Activated CD4-positive, alpha-beta T cell treated with anti-CD3 and anti-CD28 coated beads for 36 hours (primary cell): ENCODE measurements at regions of chr13 and their contacts with region 1.

Region 1: DNA sequence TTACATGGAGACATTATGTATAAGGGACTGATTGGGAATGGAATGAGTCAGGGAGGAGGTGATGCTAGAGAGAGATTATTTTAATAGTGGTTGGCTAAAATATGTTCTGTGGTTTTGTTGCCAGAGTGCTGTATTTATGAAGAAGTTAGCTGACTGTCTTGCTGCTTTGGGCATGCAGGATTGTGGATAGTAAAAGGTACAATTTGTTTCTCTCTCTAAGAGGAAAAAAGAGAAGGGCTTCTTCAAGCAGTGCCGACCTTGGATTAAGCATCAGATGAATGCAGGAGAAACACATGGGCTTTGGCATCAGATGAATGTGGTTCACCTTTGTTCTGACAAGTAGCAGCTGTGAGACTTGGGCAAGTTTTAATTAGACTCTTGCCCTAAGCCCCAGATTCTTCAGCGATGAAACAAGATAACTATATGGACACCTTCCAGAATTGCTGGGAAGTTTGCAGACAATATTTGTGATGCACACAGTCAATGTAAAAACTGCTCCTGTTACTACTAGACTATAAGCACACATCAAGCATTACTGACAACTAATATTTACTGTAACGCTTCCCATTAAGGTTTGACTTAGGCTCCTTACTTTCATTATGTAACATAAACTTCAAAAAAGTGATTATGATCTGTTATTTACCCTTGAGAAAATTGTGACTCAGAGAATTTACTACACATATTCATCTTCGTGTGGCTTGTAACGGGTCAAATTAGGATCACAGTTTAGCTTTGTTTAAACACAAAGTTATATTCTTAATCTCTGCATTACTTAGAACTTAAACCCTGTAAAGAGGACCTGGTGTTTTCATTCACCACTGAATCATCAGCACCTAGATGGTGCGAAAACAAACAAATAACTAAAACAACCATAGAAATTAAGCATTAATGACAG is 824.0 kb downstream of the PCDH9 start:
- DNase-seq: no peak
- ATAC-seq: no peak
- H3K4me3 Mint-ChIP-seq: no peak overlapping the region
- H3K27ac Mint-ChIP-seq: no peak overlapping the region
- H3K4me1 Mint-ChIP-seq: no peaks in the 10 kb centered on the region
- H3K27me3 Mint-ChIP-seq: no peaks in the 10 kb centered on the region

Region 2: DNA sequence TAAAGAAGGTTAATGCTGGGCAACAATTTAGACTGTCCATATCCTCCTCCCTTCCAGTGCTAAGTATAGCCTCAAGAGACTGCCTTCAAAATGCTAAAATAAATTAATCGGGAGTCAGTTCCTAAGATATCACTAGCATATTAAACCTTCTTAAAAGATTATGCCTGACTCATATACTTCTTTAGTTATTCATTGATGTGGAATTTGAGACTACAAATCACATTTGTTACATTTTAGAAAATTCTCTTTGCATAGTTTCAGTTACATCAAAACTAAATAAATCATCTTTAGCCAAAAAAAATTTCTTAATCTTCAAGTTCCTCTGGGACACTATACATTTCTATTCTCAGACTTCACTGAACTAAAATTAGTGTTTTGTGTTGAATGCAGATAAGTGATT is 54.9 kb after region 1 on chr13:
- CTCF ChIA-PET with region 1: interaction called, 3 read pairs
- POLR2A ChIA-PET with region 1: no interaction called
- intact Hi-C with region 1: loop called in 1 of 2 experiments (anchors 10 kb)
- DNase-seq: no peak
- ATAC-seq: no peak
- H3K4me3 Mint-ChIP-seq: no peak overlapping the region
- H3K27ac Mint-ChIP-seq: no peak overlapping the region
- H3K4me1 Mint-ChIP-seq: no peaks in the 10 kb centered on the region
- H3K27me3 Mint-ChIP-seq: no peaks in the 10 kb centered on the region